Activated CD8-positive, alpha-beta T cell treated with anti-CD3 and anti-CD28 coated beads for 36 hours (primary cell): ENCODE measurements at regions of chr1 and their contacts with region 1.

Region 1: GRCh38 chr1:158095737-158096335 is 84.9 kb upstream of the CD1D start:
- DNase-seq: peak; percentile 56
- ATAC-seq: peak; percentile 86
- H3K4me3 Mint-ChIP-seq: no peak overlapping the region
- H3K27ac Mint-ChIP-seq: no peak overlapping the region
- H3K4me1 Mint-ChIP-seq: no peaks in the 10 kb centered on the region
- H3K27me3 Mint-ChIP-seq: no peaks in the 10 kb centered on the region
- CTCF ChIP-seq: peak; percentile 67

Region 2: GRCh38 chr1:158107916-158108315 is 12.1 kb after region 1 on chr1:
- CTCF ChIA-PET with region 1: interaction called, 145 read pairs
- POLR2A ChIA-PET with region 1: no interaction called
- intact Hi-C with region 1: no loop called
- DNase-seq: no peak
- ATAC-seq: no peak
- H3K4me3 Mint-ChIP-seq: no peak overlapping the region
- H3K27ac Mint-ChIP-seq: no peak overlapping the region
- H3K4me1 Mint-ChIP-seq: peaks cover 1% of the 10 kb centered on the region
- H3K27me3 Mint-ChIP-seq: peaks cover 16% of the 10 kb centered on the region
- CTCF ChIP-seq: no peak

Region 3: DNA sequence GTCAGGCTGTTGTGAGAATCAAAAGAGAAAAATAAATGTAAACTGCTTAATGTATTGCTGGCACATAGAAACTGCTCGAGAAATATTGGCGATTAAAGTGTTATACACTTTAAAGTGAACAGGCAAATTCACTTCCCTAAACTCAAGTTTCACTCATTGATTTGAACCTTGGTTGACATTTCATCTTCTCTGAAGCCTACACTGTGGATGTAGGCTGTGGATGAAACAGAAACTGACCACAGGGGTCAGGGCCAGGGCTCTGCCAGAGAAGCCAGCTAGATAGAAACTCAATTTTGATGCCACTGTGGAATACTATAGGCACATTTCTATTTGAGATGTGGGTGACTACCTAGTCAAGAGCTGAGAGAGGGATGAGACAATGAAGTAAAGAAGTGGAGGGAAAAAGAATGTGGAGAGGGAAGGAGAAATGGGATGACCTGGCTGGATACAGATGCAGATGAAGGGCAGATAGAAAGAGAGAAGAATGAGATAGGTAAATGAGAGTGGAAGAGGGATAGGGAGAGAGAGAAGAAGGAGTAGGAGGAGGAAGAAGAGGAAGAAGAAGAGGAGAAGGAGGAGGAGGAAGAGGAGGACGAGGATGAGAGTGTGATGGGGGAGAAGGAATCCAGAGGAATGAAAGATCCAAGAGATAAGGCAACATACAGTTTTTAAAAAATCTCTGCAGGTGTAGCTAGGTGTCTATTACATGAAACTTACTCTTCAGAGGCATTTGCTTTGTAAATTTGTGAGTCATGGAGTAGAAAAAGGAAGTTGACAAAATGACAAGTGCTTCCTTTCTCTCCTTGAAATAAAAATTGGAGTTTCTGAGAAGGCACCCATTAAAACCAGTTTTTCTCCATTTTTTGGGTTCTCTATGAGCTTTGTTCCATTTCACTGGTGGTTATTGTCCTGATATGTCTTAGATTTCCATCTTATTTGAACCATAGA is 67.4 kb after region 1 on chr1:
- CTCF ChIA-PET with region 1: no interaction called
- POLR2A ChIA-PET with region 1: no interaction called
- intact Hi-C with region 1: no loop called
- DNase-seq: peak; percentile 6
- ATAC-seq: no peak
- H3K4me3 Mint-ChIP-seq: no peak overlapping the region
- H3K27ac Mint-ChIP-seq: no peak overlapping the region
- H3K4me1 Mint-ChIP-seq: no peaks in the 10 kb centered on the region
- H3K27me3 Mint-ChIP-seq: peaks cover 40% of the 10 kb centered on the region
- CTCF ChIP-seq: no peak